ENCODE measurements at regions of chr18 and their contacts with region 1.

Region 1: GRCh38 chr18:11937874-11938478 is 29.9 kb upstream of the MPPE1 start:
- DNase-seq: no peak
- H3K4me3 ChIP-seq: no peak overlapping the region
- H3K27ac ChIP-seq: peak overlapping the region in 2 of 4 donors; percentile 10 to 24
- H3K4me1 ChIP-seq: peaks cover 0 to 7% (median 3%) of the 10 kb centered on the region in 4 donors
- H3K27me3 ChIP-seq: no peaks in the 10 kb centered on the region
- CTCF ChIP-seq: peak; percentile 78 to 87 (median 81)
- EP300 ChIP-seq: no peak
- POLR2A ChIP-seq: no peak

Region 2: DNA sequence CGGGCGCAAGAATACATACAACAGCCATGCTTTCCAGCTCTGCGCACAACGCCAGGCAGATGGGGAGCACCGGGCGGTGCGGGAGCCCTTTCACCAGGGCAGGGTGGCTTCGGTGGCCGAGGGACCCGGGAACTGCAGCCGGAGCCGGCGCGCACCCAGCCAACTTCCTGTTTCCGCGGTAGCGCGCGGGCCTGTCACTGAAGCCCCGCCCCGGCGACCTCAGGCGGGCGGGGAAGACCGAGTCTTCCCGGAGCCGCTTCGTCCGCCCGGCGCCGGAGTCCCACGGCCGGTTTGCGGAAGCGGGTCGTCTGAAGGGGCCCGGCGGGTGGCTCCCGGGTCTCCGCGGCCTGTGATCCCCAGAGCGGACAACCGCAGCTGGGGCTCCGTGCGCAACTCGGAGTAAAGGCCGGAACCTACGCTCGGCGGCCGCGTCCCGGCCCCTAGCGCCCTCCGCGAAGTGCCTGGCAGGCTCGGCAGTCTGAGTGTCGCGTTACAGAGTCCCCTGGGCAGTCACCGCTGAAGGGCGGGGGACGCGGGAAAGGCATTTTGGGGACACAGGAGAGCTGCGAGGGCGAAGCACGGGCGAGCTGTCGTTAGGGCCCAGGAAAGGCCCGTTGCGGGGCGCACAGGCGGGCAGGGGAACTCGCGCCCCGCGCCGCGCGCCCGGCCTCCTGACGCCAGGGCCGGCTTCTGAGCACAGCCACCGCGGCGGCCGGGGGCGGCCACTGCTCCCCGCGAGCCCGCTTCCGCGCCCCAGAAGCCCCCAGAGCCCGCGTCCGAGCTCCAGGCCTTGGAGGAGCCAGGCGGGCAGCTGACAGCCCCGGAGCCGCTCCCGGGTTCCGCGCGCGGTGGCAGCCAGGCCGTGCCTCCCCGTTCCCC is 29.6 kb before region 1 on chr18 and contains the start of gene MPPE1:
- intact Hi-C with region 1: no loop called
- DNase-seq: peak; percentile 94
- H3K4me3 ChIP-seq: peak within 1 kb of the TSS; percentile 71 to 92 (median 80)
- H3K27ac ChIP-seq: peak within 1 kb of the TSS; percentile 95 to 100 (median 99)
- H3K4me1 ChIP-seq: peaks cover 18 to 23% (median 22%) of the 10 kb centered on the region in 4 donors
- H3K27me3 ChIP-seq: no peaks in the 10 kb centered on the region
- CTCF ChIP-seq: peak in 1 of 3 experiments; percentile 3
- EP300 ChIP-seq: no peak
- POLR2A ChIP-seq: peak; percentile 87
- total RNA-seq, gene MPPE1: 10.9 to 30.2 (median 24.4) TPM

Region 3: DNA sequence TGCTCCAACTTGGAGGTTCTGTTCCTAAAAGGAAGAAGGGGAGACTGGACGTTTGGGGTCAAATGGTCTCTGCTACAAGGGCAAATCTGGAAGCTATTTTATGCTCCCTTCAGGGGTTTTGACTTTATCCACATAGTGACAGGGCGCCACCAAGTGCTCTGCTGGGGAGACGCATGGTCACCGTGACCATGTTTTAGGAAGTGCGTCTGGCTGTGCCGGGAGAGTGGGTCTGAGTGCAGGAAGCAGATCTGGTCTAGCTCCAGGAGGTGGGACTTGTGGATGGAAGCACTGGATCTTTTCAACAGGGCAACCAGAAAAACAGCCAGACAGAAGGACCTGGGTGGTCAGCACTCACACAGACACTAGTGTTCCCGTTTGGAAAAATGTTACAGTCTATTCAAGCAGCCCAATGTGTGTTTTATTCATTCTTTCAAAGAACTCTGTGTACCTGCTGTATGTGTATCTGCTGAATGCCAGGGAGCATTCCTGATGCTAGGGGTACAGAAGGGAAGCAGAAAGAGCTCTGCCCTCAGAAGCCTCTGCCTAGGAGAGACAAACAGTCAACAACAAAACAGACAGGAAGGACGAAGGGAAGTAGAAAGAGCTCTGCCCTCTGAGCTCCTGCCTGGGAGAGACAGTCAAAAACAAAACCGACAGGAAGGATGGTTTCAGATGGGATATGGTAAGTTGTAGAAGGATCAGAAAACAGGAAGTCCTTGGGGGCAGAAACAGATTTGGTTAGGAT is 57.6 kb after region 1 on chr18:
- intact Hi-C with region 1: loop called (anchors 2 kb)
- DNase-seq: no peak
- H3K4me3 ChIP-seq: peak overlapping the region in 1 of 4 donors; percentile 21
- H3K27ac ChIP-seq: peak overlapping the region; percentile 22 to 77 (median 48)
- H3K4me1 ChIP-seq: peaks cover 38 to 68% (median 48%) of the 10 kb centered on the region in 4 donors
- H3K27me3 ChIP-seq: no peaks in the 10 kb centered on the region
- CTCF ChIP-seq: peak; percentile 74 to 83 (median 81)
- EP300 ChIP-seq: no peak
- POLR2A ChIP-seq: no peak

Region 4: DNA sequence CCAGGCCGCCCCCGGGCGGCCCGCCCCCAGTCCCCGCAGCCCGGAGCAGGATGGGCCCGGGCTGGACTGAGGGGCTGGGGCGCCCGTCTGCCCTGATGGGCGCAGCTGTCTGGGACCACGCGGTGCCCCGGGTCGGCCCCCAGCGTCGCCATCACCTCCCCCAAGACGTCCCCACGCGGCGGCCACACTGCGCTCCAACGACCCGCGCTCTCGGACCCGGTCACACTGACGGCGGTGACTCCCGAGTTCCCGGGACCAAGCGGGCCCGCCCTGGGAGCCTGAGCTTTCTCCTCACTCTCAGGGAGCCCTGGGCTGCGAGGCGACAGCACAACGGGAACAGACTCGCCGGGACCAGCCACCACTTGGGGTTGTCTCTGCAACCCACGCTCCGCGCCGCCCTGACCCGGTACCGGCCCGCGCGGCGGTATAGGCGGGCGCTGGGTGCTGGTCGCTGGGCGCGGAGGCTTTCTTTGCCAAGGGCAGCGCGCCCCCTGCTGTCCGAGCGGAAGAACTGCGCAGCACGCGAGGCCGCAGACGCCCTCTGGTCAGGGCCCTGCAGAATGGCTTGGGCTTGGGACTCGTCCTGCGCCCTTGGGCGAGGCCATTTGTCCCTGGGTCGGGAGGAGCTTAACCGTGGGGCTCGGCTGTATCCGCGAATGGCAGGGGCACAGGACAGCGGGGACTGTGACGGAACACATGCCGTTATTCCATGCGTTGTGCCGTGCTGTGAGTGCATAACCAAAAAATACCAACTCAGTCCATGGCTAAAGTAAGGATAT is 100.9 kb after region 1 on chr18:
- intact Hi-C with region 1: loop called (anchors 2 kb)
- DNase-seq: peak; percentile 94
- H3K4me3 ChIP-seq: peak overlapping the region; percentile 59 to 66 (median 62)
- H3K27ac ChIP-seq: peak overlapping the region in 3 of 4 donors; percentile 37 to 60 (median 48)
- H3K4me1 ChIP-seq: peaks cover 10 to 21% (median 16%) of the 10 kb centered on the region in 4 donors
- H3K27me3 ChIP-seq: no peaks in the 10 kb centered on the region
- CTCF ChIP-seq: peak in 2 of 3 experiments; percentile 97 to 98
- EP300 ChIP-seq: no peak
- POLR2A ChIP-seq: no peak

Measured in esophagus muscularis mucosa (tissue), 4 donors.